ENCODE measurements at regions of chr5 and their contacts with region 1.

Region 1: DNA sequence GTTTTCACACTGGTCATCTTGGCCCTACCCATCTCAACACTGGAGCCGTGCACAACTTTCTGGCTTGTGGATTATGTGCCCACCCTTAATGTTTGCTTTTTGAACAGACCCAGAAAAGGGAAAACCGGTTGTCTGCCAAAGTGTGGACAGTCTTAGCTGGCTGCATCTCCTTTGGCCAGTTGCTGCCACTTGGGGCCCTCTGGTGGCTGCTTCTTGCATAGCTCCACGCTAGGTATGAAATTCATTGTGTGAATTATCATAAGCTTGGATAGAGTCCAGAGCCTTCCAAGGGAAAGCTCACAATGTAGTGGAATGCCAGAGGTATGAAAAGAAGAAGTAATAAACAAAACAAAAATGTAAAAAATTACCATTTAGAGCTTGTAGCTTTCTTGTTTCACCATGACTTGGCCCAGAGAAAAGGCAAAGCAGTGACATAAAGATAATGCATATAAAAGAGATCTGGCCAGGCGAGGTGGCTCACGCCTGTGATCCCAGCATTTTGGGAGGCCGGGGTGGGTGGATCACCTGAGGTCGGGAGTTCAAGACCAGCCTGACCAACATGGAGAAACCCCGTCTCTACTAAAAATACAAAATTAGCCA is 12.5 kb upstream of the SLC36A3 start:
- DNase-seq: peak in 1 of 2 experiments; percentile 85
- H3K4me3 ChIP-seq: no peak overlapping the region
- H3K27ac ChIP-seq: no peak overlapping the region
- H3K4me1 ChIP-seq: peaks cover 0 to 2% (median 0%) of the 10 kb centered on the region in 4 experiments; a peak in 2 of 7 replicates
- H3K27me3 ChIP-seq: no peaks in the 10 kb centered on the region
- CTCF ChIP-seq: peak; percentile 81 to 90 (median 89)
- EP300 ChIP-seq: no peak
- POLR2A ChIP-seq: no peak
- RAD21 ChIP-seq: peak; percentile 74 to 87

Region 2: GRCh38 chr5:151068433-151069197 is 247.5 kb before region 1 on chr5:
- CTCF ChIA-PET with region 1: no interaction called
- POLR2A ChIA-PET with region 1: no interaction called
- DNase-seq: no peak
- H3K4me3 ChIP-seq: no peak overlapping the region
- H3K27ac ChIP-seq: no peak overlapping the region; the same call in 1 of the 2 replicates
- H3K4me1 ChIP-seq: peaks cover 0 to 10% (median 5%) of the 10 kb centered on the region in 4 experiments; a peak in 4 of 7 replicates
- H3K27me3 ChIP-seq: no peaks in the 10 kb centered on the region
- CTCF ChIP-seq: no peak
- EP300 ChIP-seq: no peak
- POLR2A ChIP-seq: no peak
- RAD21 ChIP-seq: no peak

Region 3: GRCh38 chr5:151298063-151298855 is 17.8 kb before region 1 on chr5:
- CTCF ChIA-PET with region 1: interaction called, 27 read pairs
- POLR2A ChIA-PET with region 1: no interaction called
- DNase-seq: no peak
- H3K4me3 ChIP-seq: no peak overlapping the region
- H3K27ac ChIP-seq: no peak overlapping the region
- H3K4me1 ChIP-seq: peaks cover 0 to 3% (median 0%) of the 10 kb centered on the region in 4 experiments; a peak in 2 of 7 replicates
- H3K27me3 ChIP-seq: no peaks in the 10 kb centered on the region
- CTCF ChIP-seq: peak; percentile 2 to 64 (median 48); a peak in 3 of 4 replicates
- EP300 ChIP-seq: no peak
- POLR2A ChIP-seq: no peak
- RAD21 ChIP-seq: peak; percentile 35 to 56; a peak in 3 of 4 replicates

Region 4: DNA sequence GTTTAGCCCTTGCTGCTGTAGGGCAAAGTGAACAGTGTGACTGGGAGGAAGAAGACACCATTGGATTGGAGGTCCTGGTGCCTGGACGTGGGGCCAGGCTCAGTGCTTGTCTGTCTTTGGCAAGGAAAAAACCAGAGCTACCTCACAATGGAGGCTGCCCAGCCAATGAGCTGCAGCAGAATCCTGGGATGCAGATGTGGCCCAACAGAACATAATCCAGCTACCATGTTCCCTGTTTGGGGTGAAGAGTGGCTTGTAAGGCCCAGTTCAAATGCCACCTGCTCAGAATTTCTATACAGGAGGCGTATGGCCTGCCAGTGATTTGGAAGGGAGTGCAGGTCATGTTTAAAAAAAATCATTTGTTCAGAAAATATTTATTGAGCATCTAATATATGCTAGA is 12.4 kb before region 1 on chr5 and contains the start of gene SLC36A3:
- CTCF ChIA-PET with region 1: interaction called, 27 read pairs
- POLR2A ChIA-PET with region 1: no interaction called
- DNase-seq: no peak
- H3K4me3 ChIP-seq: no peak within 1 kb of the TSS
- H3K27ac ChIP-seq: no peak within 1 kb of the TSS
- H3K4me1 ChIP-seq: no peaks in the 10 kb centered on the region
- H3K27me3 ChIP-seq: no peaks in the 10 kb centered on the region
- CTCF ChIP-seq: no peak
- EP300 ChIP-seq: no peak
- POLR2A ChIP-seq: no peak
- RAD21 ChIP-seq: no peak
- total RNA-seq, gene SLC36A3: not detected in 2 replicates

Region 5: DNA sequence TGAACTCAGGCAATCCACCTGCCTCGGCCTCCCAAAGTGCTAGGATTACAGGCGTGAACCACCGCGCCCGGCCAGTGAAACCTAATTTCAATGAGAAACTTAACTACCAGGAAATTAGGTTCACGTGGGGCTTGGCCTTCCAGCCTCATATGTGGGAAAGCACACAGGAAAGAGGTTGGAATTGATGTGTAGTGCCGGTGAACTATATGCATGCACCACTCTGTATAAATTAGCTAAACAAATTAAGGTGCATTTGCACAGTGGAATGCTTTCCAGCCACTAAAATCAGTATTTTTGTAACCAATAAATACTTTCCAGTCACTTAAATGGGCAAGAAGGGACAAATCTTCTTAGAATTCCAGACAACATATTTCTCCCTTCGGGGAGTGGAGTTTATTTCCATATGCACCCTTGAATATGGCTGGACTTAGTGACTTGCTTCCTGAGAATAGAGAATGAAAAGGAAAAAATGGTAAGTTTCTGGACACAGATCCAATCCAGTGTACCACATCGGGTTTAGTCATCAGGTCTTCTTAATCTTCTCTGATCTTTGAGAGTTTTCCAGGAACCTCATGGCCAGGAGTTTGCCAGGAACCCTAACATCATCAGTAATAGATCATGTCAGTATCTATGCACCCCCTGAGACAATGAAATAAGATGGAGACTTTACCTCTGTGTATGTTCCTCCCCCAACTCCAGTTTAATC is 417.4 kb after region 1 on chr5:
- CTCF ChIA-PET with region 1: no interaction called
- POLR2A ChIA-PET with region 1: no interaction called
- DNase-seq: no peak
- H3K4me3 ChIP-seq: no peak overlapping the region
- H3K27ac ChIP-seq: no peak overlapping the region
- H3K4me1 ChIP-seq: peaks cover 0 to 7% (median 3%) of the 10 kb centered on the region in 4 experiments; a peak in 3 of 7 replicates
- H3K27me3 ChIP-seq: no peaks in the 10 kb centered on the region
- CTCF ChIP-seq: no peak
- EP300 ChIP-seq: no peak
- POLR2A ChIP-seq: no peak
- RAD21 ChIP-seq: no peak